ENCODE measurements at regions of chr7 and their contacts with region 1.

Region 1: DNA sequence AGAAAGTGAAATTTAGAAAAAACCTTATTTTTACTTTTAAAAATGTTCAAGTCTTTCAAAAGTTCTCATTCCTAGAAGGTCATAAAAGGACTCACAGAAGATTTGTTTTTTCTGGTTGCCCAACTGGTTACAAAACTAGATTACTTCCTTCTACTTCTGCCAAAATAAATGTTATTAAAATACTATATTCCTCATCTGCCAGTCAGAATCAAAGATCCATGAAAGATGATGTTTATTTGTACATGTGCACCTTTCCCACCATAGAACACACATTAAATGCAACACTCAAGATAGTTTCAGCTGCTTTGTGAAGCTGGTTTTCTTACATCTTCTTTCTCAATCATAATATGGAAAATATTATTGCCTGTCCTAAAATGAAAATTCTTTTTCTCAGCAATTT is 465.4 kb downstream of the ETV1 start:
- DNase-seq: no peak
- ATAC-seq: no peak
- H3K4me3 ChIP-seq: no peak overlapping the region
- H3K27ac ChIP-seq: no peak overlapping the region
- H3K4me1 ChIP-seq: no peaks in the 10 kb centered on the region
- H3K27me3 ChIP-seq: no peaks in the 10 kb centered on the region
- CTCF ChIP-seq: no peak

Region 2: GRCh38 chr7:13731643-13732042 is 207.6 kb after region 1 on chr7:
- intact Hi-C with region 1: loop called in 1 of 10 experiments (anchors 10 kb)
- DNase-seq: no peak
- ATAC-seq: no peak
- H3K4me3 ChIP-seq: no peak overlapping the region
- H3K27ac ChIP-seq: no peak overlapping the region
- H3K4me1 ChIP-seq: no peaks in the 10 kb centered on the region
- H3K27me3 ChIP-seq: no peaks in the 10 kb centered on the region
- CTCF ChIP-seq: no peak

Region 3: DNA sequence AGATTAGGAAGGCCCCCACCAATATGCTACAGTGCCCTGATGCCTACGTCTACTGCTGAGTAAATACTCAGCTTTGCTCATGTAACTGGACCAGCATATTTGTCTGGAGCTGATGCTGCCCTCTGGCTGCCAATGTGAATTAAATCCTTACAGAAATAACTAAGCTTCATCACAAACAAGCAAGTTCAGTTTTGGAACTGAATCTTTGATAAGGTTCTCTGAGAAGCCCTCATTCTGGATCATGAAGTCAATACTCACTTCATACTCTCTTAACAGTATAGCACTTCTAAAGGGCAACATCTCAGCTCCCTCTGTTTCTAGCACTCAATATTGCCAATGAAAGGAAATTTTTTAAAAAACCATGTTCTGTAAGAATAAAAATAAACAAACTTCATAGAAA is 218.7 kb after region 1 on chr7:
- intact Hi-C with region 1: loop called in 3 of 10 experiments (anchors 5 to 10 kb)
- DNase-seq: peak in 1 of 2 donors; percentile 18
- ATAC-seq: peak in 7 of 8 donors; percentile 59 to 81 (median 70)
- H3K4me3 ChIP-seq: no peak overlapping the region
- H3K27ac ChIP-seq: no peak overlapping the region
- H3K4me1 ChIP-seq: peaks cover 0 to 16% (median 10%) of the 10 kb centered on the region in 9 donors
- H3K27me3 ChIP-seq: no peaks in the 10 kb centered on the region
- CTCF ChIP-seq: peak; percentile 10 to 65 (median 52)

Region 4: DNA sequence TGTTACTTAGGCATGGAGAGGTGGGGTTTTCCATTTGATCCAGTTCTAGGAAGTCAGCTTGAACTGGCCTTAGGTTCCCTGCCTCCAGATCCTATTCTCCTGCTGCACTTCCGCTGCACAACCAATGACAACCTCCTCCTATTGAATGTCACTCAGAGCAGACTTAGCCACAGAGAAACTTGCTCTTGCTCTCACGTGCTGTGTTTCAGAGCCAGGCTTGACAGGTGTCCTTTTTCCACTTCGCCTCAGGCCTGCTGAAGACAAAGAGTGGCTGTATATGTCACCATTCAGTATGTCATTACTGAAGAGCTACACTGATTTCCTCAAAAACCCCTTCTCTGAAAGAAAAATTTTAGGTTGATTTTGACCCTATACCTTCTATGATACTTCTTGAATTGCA is 580.8 kb after region 1 on chr7:
- intact Hi-C with region 1: loop called in 1 of 10 experiments (anchors 10 kb)
- DNase-seq: no peak
- ATAC-seq: no peak
- H3K4me3 ChIP-seq: no peak overlapping the region
- H3K27ac ChIP-seq: no peak overlapping the region
- H3K4me1 ChIP-seq: no peaks in the 10 kb centered on the region
- H3K27me3 ChIP-seq: no peaks in the 10 kb centered on the region
- CTCF ChIP-seq: no peak

Region 5: GRCh38 chr7:14457568-14458453 is 933.7 kb after region 1 on chr7:
- intact Hi-C with region 1: loop called in 4 of 10 experiments (anchors 10 kb)
- DNase-seq: peak; percentile 41 to 73
- ATAC-seq: peak in 7 of 8 donors; percentile 55 to 87 (median 79)
- H3K4me3 ChIP-seq: peak overlapping the region in 4 of 10 donors; percentile 13 to 26 (median 18)
- H3K27ac ChIP-seq: peak overlapping the region in 1 of 10 donors; percentile 37
- H3K4me1 ChIP-seq: peaks cover 0 to 7% (median 0%) of the 10 kb centered on the region in 9 donors
- H3K27me3 ChIP-seq: no peaks in the 10 kb centered on the region
- CTCF ChIP-seq: peak; percentile 80 to 93 (median 89)

Region 6: DNA sequence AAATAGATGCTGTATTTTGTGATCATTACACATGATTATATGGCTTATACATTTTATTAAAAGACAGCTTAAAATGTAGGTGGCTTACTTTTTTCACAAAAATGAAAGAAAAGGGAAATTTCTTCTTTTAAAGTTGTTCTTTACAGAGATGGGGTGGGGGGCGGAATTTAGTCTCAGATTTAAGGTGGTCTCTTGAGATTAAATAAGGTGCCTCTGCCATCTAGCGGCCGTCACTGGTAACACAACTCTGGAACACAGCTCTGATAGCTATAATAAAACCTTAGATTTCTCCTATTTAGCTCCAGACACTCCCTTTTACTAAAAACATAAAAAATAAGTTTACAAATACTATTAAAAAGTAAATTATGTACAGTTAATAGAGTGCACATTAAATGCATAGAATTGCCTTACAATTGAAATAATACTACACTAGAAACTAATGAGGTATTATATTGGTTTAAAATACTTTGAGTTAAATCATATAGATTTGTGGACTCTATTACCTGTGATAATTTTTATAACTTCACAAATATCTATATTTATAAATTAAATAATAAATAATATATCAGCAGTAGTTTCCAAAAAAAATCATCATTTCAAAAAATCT is 1167.6 kb after region 1 on chr7:
- intact Hi-C with region 1: loop called in 2 of 10 experiments (anchors 10 kb)
- DNase-seq: peak; percentile 20 to 38
- ATAC-seq: no peak
- H3K4me3 ChIP-seq: no peak overlapping the region
- H3K27ac ChIP-seq: no peak overlapping the region
- H3K4me1 ChIP-seq: peaks cover 0 to 20% (median 0%) of the 10 kb centered on the region in 9 donors
- H3K27me3 ChIP-seq: no peaks in the 10 kb centered on the region
- CTCF ChIP-seq: peak; percentile 63 to 91 (median 87)

Measured in heart right ventricle (tissue), 16 donors.